PC-9 (cell line): ENCODE measurements at regions of chr20 and their contacts with region 1.

Region 1: DNA sequence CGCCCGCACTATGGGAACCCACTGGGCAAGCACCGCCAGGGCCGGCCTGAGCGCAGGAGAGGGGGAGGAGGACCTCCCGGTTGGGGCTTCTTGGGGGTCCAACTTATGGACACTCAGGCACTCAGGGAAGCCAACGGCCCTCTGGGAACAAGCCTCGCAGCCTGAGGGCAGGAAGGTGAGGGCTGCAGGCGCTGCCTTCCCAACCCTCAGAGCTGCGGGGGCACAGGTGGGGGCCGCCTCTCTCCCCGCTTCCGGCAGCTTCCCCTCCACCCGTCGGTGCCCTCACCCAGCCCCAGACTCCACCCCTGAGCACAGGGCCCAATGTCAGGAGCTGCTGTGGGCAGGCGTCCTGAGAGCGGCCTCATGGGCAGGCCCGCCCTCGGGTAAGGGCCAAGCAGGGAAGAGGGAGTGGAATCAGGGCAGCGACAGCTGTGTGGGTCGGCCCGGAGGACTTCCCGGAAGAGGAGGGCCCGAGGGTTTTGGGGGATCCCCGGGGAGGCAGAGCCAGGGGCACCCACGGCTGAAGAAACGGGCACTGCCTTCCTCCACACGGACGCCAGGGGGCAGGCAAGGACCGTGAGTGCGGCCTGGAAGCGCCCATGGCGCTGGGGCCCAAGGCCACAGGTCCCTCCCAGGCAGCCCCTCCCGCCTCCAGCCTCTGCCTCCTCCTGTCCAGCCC is 488 bp upstream of the PTK6 start:
- DNase-seq: peak; percentile 97 to 100
- H3K4me3 ChIP-seq: peak overlapping the region; percentile 66
- H3K27ac ChIP-seq: peak overlapping the region; percentile 90
- H3K4me1 ChIP-seq: peaks cover 52% of the 10 kb centered on the region
- H3K27me3 ChIP-seq: no peaks in the 10 kb centered on the region
- CTCF ChIP-seq: peak; percentile 91

Region 2: GRCh38 chr20:63230800-63231268 is 306.8 kb before region 1 on chr20:
- CTCF ChIA-PET with region 1: no interaction called
- POLR2A ChIA-PET with region 1: interaction called, 23 read pairs
- intact Hi-C with region 1: no loop called
- DNase-seq: no peak
- H3K4me3 ChIP-seq: no peak overlapping the region
- H3K27ac ChIP-seq: no peak overlapping the region
- H3K4me1 ChIP-seq: peaks cover 43% of the 10 kb centered on the region
- H3K27me3 ChIP-seq: no peaks in the 10 kb centered on the region
- CTCF ChIP-seq: no peak

Region 3: DNA sequence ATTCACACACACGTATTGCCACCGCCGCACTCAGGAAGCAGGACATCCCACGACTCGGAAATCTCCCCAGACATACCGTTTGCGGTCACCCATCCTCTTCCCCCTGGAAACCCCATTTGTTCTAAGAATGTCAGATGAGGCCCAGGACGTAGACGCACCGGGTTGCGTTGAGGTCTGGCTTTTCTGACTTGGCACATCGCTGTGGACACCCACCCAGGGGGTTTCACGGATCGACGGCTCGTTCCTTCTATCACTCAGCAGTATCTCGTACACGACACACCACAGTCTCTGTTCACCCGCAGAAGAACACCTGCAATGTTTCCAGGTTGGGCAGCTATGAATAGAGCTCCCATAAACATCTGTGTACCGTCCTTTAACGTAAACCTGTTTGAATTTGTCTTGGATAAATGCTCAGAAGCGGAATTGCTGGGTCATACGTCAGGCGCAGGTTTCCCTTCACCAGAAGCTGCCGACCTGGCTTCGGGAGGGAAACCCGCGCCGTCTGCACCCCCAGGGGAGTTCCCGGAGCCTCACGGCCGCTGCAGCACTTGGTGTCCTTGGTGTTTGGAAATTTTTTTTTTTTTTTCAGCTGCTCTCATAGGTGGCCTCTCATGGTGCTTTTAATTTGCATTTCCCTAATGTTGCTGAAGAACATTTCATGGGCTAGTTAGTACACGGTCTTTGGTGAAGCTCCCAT is 29.4 kb before region 1 on chr20:
- CTCF ChIA-PET with region 1: no interaction called
- POLR2A ChIA-PET with region 1: no interaction called
- intact Hi-C with region 1: no loop called
- DNase-seq: no peak
- H3K4me3 ChIP-seq: no peak overlapping the region
- H3K27ac ChIP-seq: no peak overlapping the region
- H3K4me1 ChIP-seq: no peaks in the 10 kb centered on the region
- H3K27me3 ChIP-seq: peaks cover 98% of the 10 kb centered on the region
- CTCF ChIP-seq: no peak

Region 4: DNA sequence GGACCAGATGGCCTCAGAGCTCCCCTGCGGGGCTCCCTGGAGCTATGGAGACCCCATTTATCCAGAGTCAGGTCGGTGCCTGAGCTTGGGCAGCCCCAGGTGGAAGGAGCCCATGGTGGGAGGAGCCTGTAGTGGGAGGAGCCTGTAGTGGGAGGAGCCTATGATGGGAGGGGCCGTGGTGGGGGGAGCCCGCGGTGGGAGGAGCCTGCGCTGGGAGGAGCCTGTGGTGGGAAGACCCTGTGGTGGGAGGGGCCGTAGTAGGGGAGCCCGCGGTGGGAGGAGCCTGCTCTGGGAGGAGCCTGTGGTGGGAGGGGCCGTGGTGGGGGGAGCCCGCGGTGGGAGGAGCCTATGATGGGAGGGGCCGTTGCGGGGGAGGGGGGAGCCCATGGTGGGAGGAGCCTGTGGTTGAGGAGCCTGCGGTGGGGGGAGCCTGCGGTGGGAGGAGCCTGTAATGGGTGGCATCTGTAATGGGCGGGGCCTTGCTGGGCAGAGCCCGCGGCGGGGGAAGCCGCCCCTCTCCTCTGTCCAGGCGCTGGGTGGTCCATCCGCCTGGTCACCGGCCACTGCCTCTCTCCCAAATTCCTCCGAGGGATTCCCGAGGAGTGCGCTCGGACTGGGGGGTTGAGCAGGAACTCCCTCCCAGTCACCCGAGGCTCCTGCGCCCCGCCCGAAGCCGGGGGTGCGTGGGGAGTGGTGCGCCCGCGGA is 15.7 kb after region 1 on chr20:
- CTCF ChIA-PET with region 1: interaction called, 3 read pairs
- POLR2A ChIA-PET with region 1: interaction called, 4 read pairs
- intact Hi-C with region 1: loop called (anchors 1 kb)
- DNase-seq: peak; percentile 77 to 98
- H3K4me3 ChIP-seq: peak overlapping the region; percentile 81
- H3K27ac ChIP-seq: peak overlapping the region; percentile 79
- H3K4me1 ChIP-seq: peaks cover 15% of the 10 kb centered on the region
- H3K27me3 ChIP-seq: no peaks in the 10 kb centered on the region
- CTCF ChIP-seq: no peak

Region 5: GRCh38 chr20:63627129-63627750 is 89.6 kb after region 1 on chr20:
- CTCF ChIA-PET with region 1: interaction called, 4 read pairs
- POLR2A ChIA-PET with region 1: interaction called, 11 read pairs
- intact Hi-C with region 1: loop called (anchors 1 kb)
- DNase-seq: peak; percentile 81 to 97
- H3K4me3 ChIP-seq: peak overlapping the region; percentile 92
- H3K27ac ChIP-seq: no peak overlapping the region
- H3K4me1 ChIP-seq: peaks cover 20% of the 10 kb centered on the region
- H3K27me3 ChIP-seq: no peaks in the 10 kb centered on the region
- CTCF ChIP-seq: no peak

Region 6: GRCh38 chr20:63698739-63699465 is 161.2 kb after region 1 on chr20:
- CTCF ChIA-PET with region 1: interaction called, 11 read pairs
- POLR2A ChIA-PET with region 1: no interaction called
- intact Hi-C with region 1: no loop called
- DNase-seq: peak; percentile 79 to 90
- H3K4me3 ChIP-seq: peak overlapping the region; percentile 27; the same call in 1 of the 2 replicates
- H3K27ac ChIP-seq: peak overlapping the region; percentile 65
- H3K4me1 ChIP-seq: peaks cover 20% of the 10 kb centered on the region
- H3K27me3 ChIP-seq: no peaks in the 10 kb centered on the region
- CTCF ChIP-seq: no peak

Region 7: GRCh38 chr20:63864847-63865640 is 327.4 kb after region 1 on chr20 and contains the start of gene TPD52L2:
- CTCF ChIA-PET with region 1: interaction called, 8 read pairs
- POLR2A ChIA-PET with region 1: interaction called, 18 read pairs
- intact Hi-C with region 1: loop called (anchors 1 kb)
- DNase-seq: peak; percentile 99
- H3K4me3 ChIP-seq: peak within 1 kb of the TSS; percentile 77
- H3K27ac ChIP-seq: peak within 1 kb of the TSS; percentile 88
- H3K4me1 ChIP-seq: peaks cover 28% of the 10 kb centered on the region
- H3K27me3 ChIP-seq: no peaks in the 10 kb centered on the region
- CTCF ChIP-seq: no peak
- total RNA-seq, gene TPD52L2: 149 and 158 TPM in 2 replicates

Region 8: GRCh38 chr20:63980806-63981728 is 443.4 kb after region 1 on chr20 and contains the start of gene PRPF6:
- CTCF ChIA-PET with region 1: interaction called, 15 read pairs
- POLR2A ChIA-PET with region 1: no interaction called
- intact Hi-C with region 1: no loop called
- DNase-seq: peak; percentile 90 to 96
- H3K4me3 ChIP-seq: peak within 1 kb of the TSS; percentile 99
- H3K27ac ChIP-seq: peak within 1 kb of the TSS; percentile 62
- H3K4me1 ChIP-seq: peaks cover 17% of the 10 kb centered on the region
- H3K27me3 ChIP-seq: no peaks in the 10 kb centered on the region
- CTCF ChIP-seq: peak; percentile 78
- total RNA-seq, gene PRPF6: 103 and 111 TPM in 2 replicates

Region 9: DNA sequence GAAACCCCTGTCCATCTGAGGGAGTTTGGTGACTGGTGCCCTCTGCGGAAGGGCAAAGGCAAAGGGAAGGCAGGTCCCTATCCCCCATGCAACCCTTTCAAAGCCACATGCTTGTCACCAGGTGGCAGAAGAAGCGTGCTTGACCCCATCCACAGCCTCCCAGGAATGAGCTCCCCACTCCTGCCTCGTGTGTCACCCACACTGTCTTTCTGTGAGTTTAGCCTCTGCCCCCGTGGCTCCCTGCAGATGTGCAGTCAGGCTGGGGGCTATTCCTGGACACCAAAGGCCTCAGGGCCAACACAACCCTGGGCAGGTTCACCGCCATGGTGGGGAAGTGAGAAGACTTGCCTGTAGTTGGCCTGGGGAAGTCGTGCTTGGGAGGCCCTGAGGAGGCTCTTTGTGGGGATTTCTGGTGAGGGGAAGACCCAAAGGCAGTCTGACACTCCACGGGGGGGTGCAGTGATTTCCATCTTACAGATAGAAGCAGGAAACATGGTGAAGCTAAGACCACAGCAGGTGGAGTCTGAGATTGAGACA is 701.3 kb after region 1 on chr20:
- CTCF ChIA-PET with region 1: no interaction called
- POLR2A ChIA-PET with region 1: no interaction called
- intact Hi-C with region 1: no loop called
- DNase-seq: no peak
- H3K4me3 ChIP-seq: no peak overlapping the region
- H3K27ac ChIP-seq: no peak overlapping the region
- H3K4me1 ChIP-seq: no peaks in the 10 kb centered on the region
- H3K27me3 ChIP-seq: peaks cover 69% of the 10 kb centered on the region
- CTCF ChIP-seq: no peak